ENCODE measurements at regions of chr10 and their contacts with region 1.

Region 1: DNA sequence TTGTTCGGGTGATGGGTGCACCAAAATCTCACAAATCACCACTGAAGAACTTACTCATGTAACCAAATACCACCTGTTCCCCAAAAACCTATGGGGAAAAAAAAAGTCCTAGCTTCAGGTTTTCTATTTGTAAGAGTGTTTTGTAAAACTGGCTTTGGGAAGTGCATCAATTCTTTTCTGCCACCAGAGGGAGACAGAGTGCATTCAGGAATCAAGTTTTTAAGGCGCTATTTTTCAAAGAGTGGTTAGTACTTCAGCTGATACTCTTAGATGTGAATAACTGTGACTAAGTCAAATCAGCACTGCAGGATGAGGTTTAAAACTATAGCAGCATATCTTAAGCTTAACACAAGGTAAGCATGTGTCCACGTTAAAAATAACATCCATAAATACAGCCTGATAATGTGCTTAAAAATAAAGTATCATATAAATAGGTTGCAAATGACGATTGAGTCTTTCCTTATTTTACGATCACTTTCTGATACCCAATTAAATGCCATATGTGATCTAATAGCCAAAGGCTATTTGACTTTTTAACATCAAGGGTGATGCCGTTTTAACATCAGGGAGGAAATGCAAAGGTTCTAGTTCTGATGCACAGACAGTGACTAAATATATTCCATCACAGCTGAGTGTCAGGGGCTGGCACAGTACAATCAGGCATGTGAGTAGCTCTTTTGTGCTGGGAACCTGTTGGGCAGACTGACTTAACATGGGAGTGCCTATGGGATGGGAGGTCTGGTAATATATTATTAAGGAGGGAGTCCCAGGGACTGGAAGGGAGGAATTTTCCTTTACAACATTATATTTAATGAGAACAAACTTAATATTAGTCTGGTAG is 10.6 kb upstream of the LYZL2 start:
- DNase-seq: no peak
- H3K4me3 ChIP-seq: no peak overlapping the region
- CTCF ChIP-seq: peak; percentile 71

Region 2: GRCh38 chr10:30392564-30392990 is 247.6 kb before region 1 on chr10:
- CTCF ChIA-PET with region 1: interaction called, 20 read pairs
- POLR2A ChIA-PET with region 1: no interaction called
- DNase-seq: no peak
- H3K4me3 ChIP-seq: no peak overlapping the region
- CTCF ChIP-seq: peak; percentile 95

Region 3: GRCh38 chr10:30398788-30399187 is 241.4 kb before region 1 on chr10:
- CTCF ChIA-PET with region 1: interaction called, 10 read pairs
- POLR2A ChIA-PET with region 1: no interaction called
- DNase-seq: no peak
- H3K4me3 ChIP-seq: no peak overlapping the region
- CTCF ChIP-seq: peak; percentile 7

Region 4: GRCh38 chr10:30519639-30520038 is 120.5 kb before region 1 on chr10:
- CTCF ChIA-PET with region 1: no interaction called
- POLR2A ChIA-PET with region 1: no interaction called
- DNase-seq: no peak
- H3K4me3 ChIP-seq: no peak overlapping the region
- CTCF ChIP-seq: no peak

Region 5: DNA sequence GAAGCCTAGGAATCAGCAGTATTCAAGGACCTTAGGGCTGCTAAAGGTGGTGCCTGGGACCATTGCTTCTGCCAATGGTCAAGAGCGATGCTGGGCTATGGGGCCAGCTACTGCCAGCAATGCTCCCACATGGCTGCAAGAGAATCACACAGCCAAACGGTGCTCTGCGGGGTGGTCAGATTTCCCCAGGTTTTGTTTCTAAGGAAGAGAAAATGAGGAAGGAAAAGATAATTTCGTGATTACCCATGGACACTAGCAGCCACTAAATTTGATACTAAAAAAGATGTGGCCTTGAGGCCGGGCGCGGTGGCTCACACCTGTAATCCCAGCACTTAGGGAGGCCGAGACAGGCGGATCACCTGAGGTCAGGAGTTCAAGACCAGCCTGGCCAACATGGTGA is 93.7 kb before region 1 on chr10:
- CTCF ChIA-PET with region 1: no interaction called
- POLR2A ChIA-PET with region 1: no interaction called
- DNase-seq: no peak
- H3K4me3 ChIP-seq: no peak overlapping the region
- CTCF ChIP-seq: no peak

Region 6: DNA sequence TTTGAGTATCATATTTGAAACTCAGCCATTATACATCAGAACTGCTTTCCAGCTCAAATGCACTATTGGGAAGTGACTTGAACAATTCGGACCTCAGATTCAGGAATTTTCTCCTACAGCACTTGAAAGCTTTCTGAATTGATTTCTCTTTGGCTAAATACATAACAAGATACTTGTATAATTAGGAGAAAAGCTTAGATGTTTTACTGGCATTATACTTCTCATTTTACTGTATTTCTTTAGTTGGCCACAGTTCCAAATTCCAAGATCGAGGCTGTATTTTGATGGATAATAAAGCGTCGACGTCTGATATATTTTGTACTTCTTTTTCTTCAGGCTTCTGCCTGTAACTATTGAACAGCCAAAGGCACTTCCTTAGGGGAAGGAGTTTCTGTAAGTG is 16.1 kb after region 1 on chr10:
- CTCF ChIA-PET with region 1: interaction called, 26 read pairs
- POLR2A ChIA-PET with region 1: no interaction called
- DNase-seq: no peak
- H3K4me3 ChIP-seq: no peak overlapping the region
- CTCF ChIP-seq: no peak

Region 7: GRCh38 chr10:30662814-30663213 is 22.6 kb after region 1 on chr10:
- CTCF ChIA-PET with region 1: interaction called, 22 read pairs
- POLR2A ChIA-PET with region 1: no interaction called
- DNase-seq: no peak
- H3K4me3 ChIP-seq: no peak overlapping the region
- CTCF ChIP-seq: no peak

Region 8: GRCh38 chr10:30671026-30671616 is 31.0 kb after region 1 on chr10:
- CTCF ChIA-PET with region 1: interaction called, 22 read pairs
- POLR2A ChIA-PET with region 1: no interaction called
- DNase-seq: peak; percentile 38
- H3K4me3 ChIP-seq: no peak overlapping the region; the same call in 1 of the 2 replicates
- CTCF ChIP-seq: peak; percentile 60

Region 9: GRCh38 chr10:30967650-30968410 is 327.7 kb after region 1 on chr10:
- CTCF ChIA-PET with region 1: no interaction called
- POLR2A ChIA-PET with region 1: no interaction called
- DNase-seq: no peak
- H3K4me3 ChIP-seq: no peak overlapping the region
- CTCF ChIP-seq: no peak